ENCODE measurements at regions of chr12 and their contacts with region 1.

Region 1: DNA sequence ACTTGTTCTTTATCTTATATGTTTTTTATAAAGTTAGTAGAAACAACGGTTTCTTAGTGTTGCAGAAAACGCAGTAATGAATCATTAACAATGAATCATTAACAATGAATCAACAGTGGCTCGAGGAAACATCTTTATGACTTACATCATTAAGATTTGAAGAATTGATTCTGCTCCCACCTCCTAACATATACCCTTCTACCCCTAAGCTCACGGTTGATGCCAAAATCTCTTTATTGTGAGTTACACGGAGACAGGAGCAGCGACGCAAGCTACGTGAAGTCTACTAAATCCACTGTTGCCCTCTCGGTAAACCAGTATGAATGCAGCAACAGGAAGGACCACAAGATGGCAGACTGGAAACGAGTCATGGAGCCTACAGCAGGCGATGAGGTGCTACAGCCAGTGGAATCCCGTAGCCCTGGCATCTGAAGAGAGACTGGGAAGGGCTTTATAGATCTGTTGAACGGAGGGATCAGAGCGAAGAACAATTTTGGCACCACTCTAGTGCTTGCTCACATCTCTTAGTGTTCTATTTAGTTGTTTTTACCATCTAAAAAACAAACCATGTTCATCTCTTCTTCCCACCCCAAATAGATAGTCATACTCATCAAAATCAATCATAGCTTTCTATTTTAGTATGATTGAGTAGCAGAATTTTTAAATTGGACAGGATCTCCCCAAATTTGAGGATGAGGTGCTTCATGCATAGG is 332.7 kb downstream of the DUSP6 start:
- DNase-seq: peak; percentile 98
- H3K4me3 ChIP-seq: peak overlapping the region; percentile 39
- H3K27ac ChIP-seq: peak overlapping the region; percentile 66
- H3K4me1 ChIP-seq: peaks cover 26% of the 10 kb centered on the region
- H3K27me3 ChIP-seq: no peaks in the 10 kb centered on the region
- CTCF ChIP-seq: peak; percentile 98

Region 2: GRCh38 chr12:88723219-88723618 is 296.3 kb before region 1 on chr12:
- CTCF ChIA-PET with region 1: no interaction called
- POLR2A ChIA-PET with region 1: no interaction called
- intact Hi-C with region 1: no loop called
- DNase-seq: no peak
- H3K4me3 ChIP-seq: no peak overlapping the region
- H3K27ac ChIP-seq: no peak overlapping the region
- H3K4me1 ChIP-seq: no peaks in the 10 kb centered on the region
- H3K27me3 ChIP-seq: no peaks in the 10 kb centered on the region
- CTCF ChIP-seq: no peak

Region 3: GRCh38 chr12:88844423-88844822 is 175.1 kb before region 1 on chr12:
- CTCF ChIA-PET with region 1: no interaction called
- POLR2A ChIA-PET with region 1: no interaction called
- intact Hi-C with region 1: no loop called
- DNase-seq: no peak
- H3K4me3 ChIP-seq: no peak overlapping the region
- H3K27ac ChIP-seq: no peak overlapping the region
- H3K4me1 ChIP-seq: no peaks in the 10 kb centered on the region
- H3K27me3 ChIP-seq: no peaks in the 10 kb centered on the region
- CTCF ChIP-seq: no peak

Region 4: GRCh38 chr12:89051065-89051677 is 31.6 kb after region 1 on chr12:
- CTCF ChIA-PET with region 1: no interaction called
- POLR2A ChIA-PET with region 1: no interaction called
- intact Hi-C with region 1: loop called (anchors 2 kb)
- DNase-seq: peak; percentile 86
- H3K4me3 ChIP-seq: no peak overlapping the region
- H3K27ac ChIP-seq: no peak overlapping the region
- H3K4me1 ChIP-seq: peaks cover 66% of the 10 kb centered on the region
- H3K27me3 ChIP-seq: no peaks in the 10 kb centered on the region
- CTCF ChIP-seq: peak; percentile 95

Region 5: GRCh38 chr12:89345830-89346740 is 326.5 kb after region 1 on chr12:
- CTCF ChIA-PET with region 1: interaction called, 6 read pairs
- POLR2A ChIA-PET with region 1: no interaction called
- intact Hi-C with region 1: loop called (anchors 1 kb)
- DNase-seq: peak; percentile 99
- H3K4me3 ChIP-seq: peak overlapping the region; percentile 11
- H3K27ac ChIP-seq: peak overlapping the region; percentile 97
- H3K4me1 ChIP-seq: peaks cover 47% of the 10 kb centered on the region
- H3K27me3 ChIP-seq: no peaks in the 10 kb centered on the region
- CTCF ChIP-seq: no peak

Region 6: GRCh38 chr12:89461649-89462612 is 442.4 kb after region 1 on chr12:
- CTCF ChIA-PET with region 1: interaction called, 34 read pairs
- POLR2A ChIA-PET with region 1: no interaction called
- intact Hi-C with region 1: loop called (anchors 1 kb)
- DNase-seq: peak; percentile 91
- H3K4me3 ChIP-seq: peak overlapping the region; percentile 18
- H3K27ac ChIP-seq: peak overlapping the region; percentile 88
- H3K4me1 ChIP-seq: peaks cover 77% of the 10 kb centered on the region
- H3K27me3 ChIP-seq: no peaks in the 10 kb centered on the region
- CTCF ChIP-seq: peak; percentile 66

Region 7: DNA sequence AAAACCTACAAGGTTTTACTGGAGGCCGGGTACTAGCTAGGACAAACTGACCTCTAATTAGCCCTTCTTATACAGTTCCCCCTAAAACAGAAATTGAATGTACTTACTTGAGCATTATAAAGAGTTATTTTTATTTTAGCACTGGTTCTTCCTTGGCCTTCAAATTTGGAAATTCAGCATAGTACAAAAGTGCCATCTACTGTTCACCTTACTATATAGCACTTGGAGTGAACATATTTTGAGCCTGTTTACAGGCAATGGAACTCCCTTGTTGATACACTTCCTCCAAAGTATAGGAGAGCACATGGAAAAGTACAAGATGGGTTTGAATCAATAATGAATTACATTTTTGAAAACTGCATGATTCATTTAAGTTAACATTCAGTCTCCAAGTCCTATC is 510.2 kb after region 1 on chr12:
- CTCF ChIA-PET with region 1: interaction called, 10 read pairs
- POLR2A ChIA-PET with region 1: no interaction called
- intact Hi-C with region 1: loop called (anchors 1 kb)
- DNase-seq: peak; percentile 76
- H3K4me3 ChIP-seq: no peak overlapping the region
- H3K27ac ChIP-seq: no peak overlapping the region
- H3K4me1 ChIP-seq: peaks cover 13% of the 10 kb centered on the region
- H3K27me3 ChIP-seq: no peaks in the 10 kb centered on the region
- CTCF ChIP-seq: peak; percentile 81